ENCODE measurements at regions of chr4 and their contacts with region 1.

Region 1: GRCh38 chr4:73653695-73654106 is 33.5 kb upstream of the RASSF6 start:
- DNase-seq: peak; percentile 22
- CTCF ChIP-seq: peak; percentile 47

Region 2: GRCh38 chr4:73573794-73574406 is 79.8 kb before region 1 on chr4:
- in situ Hi-C with region 1: loop called (anchors 25 kb)
- DNase-seq: peak; percentile 31
- CTCF ChIP-seq: peak; percentile 84

Region 3: DNA sequence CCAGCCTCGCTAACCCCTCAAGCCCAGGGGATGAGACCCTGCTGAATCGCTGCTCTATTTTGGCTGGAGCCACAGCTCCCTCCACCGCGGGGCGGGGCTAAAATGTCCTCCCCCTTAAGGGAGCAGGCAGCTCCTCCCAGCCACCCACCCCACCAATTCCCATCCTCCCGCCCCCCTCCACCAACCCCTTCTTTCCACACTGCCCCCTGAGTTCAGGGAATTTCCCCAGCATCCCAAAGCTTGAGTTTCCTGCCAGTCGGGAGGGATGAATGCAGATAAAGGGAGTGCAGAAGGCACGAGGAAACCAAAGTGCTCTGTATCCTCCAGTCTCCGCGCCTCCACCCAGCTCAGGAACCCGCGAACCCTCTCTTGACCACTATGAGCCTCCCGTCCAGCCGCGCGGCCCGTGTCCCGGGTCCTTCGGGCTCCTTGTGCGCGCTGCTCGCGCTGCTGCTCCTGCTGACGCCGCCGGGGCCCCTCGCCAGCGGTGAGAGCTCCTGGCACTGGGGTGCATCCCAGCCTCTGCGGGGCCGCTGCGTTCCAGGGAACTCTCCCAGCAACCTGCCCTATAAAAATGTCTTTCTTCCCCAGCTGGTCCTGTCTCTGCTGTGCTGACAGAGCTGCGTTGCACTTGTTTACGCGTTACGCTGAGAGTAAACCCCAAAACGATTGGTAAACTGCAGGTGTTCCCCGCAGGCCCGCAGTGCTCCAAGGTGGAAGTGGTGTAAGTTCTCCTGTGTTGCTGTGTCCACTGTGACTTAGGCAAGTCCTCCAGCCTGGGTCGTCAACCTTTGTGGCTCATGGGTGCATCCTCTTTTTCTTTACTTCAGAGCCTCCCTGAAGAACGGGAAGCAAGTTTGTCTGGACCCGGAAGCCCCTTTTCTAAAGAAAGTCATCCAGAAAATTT is 182.9 kb after region 1 on chr4 and contains the start of gene CXCL6:
- in situ Hi-C with region 1: no loop called
- DNase-seq: no peak
- CTCF ChIP-seq: no peak

Region 4: DNA sequence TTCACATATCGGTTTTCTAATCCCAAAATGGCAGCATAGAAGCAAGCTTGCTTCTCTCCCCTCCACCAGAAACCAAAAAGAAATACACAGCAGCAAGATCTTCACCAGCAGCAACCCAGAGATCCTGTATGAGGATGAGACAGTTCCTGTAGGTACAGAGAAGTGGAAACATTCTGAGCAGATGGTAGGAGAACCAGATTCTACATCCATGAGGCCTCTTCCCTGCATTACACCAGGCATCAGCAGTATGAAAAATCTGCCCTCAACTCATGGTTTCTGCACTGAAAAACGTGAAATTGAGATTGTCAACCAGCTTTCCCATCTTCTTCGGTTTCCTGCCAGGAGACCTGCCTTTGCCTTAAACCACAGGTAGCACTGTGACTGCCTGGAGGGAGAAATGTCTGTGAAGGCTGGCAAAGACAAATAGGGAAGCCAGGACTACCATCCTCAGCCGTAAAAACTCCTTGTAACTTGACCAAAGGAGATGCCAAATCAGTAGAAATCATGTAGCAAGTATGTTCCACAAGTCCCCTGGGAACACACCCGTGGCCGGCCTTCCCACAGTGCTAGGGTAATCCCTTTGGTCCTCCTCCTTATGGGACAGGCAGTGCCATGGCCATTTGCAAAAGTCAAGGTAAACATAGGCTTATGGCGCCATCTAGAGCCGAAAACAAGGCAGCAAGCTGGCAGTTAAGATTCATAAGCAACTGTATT is 480.2 kb after region 1 on chr4:
- in situ Hi-C with region 1: loop called (anchors 25 kb)
- DNase-seq: peak; percentile 15
- CTCF ChIP-seq: peak; percentile 87

Measured in GM13977 (cell line).